RWPE1 (cell line): ENCODE measurements at regions of chr7 and their contacts with region 1.

Region 1: GRCh38 chr7:5349437-5350173 is 66.9 kb downstream of the SLC29A4 start:
- DNase-seq: no peak
- H3K27ac ChIP-seq: no peak overlapping the region
- CTCF ChIP-seq: no peak

Region 2: DNA sequence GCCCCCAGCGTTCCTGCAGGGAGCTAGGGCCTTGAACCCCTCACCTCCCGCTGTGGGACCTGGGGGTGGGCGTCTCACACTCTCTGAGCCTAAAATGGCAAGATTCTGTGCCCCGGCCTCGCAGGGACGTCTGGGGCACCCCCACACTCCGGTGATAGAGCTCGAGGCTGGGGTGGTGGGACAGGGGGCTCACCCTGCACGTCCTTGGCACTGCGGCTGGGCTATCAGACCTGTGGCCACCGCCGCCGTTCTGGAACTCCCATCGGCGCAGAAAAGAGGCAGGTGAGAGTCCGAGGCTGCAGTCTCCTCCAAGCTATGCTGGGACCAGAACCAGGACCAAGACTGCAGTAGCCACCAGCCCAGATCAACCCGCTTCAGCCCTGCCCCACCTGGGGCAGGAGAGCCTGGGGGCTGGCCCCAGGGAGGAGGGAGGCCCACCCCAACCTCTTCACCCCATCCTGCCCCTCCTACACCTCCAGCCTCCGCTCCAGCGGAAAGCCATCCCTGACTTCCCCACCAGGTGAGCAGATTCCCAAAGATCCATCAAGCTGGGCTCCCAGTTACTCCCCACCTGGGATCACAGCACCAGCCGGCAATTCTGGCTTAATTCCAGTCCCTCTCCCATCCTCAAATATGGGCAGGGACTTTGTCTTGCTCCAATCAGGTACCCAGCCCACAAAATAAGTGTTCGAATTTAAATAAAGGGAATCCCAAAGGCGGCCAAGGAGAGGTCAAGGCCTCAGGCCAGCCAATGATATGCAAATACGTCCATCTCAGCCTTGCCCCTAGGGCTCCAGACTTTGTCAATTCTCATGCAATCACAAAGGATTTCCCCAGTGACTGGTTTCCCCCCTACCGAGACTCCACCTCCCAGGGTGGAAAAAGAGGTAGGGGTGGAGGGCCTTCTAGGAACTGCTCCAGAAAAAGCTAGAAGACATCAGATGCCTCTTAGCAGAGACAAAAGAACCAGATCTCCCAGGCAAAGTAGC is 57.6 kb after region 1 on chr7:
- CTCF ChIA-PET with region 1: no interaction called
- POLR2A ChIA-PET with region 1: interaction called, 13 read pairs
- DNase-seq: no peak
- H3K27ac ChIP-seq: peak overlapping the region; percentile 20; the same call in 1 of the 2 replicates
- CTCF ChIP-seq: no peak

Region 3: GRCh38 chr7:5670183-5670935 is 320.8 kb after region 1 on chr7:
- CTCF ChIA-PET with region 1: no interaction called
- POLR2A ChIA-PET with region 1: no interaction called
- DNase-seq: no peak
- H3K27ac ChIP-seq: peak overlapping the region; percentile 40
- CTCF ChIP-seq: no peak